Activated CD8-positive, alpha-beta T cell treated with anti-CD3 and anti-CD28 coated beads for 36 hours (primary cell): ENCODE measurements at regions of chr9 and their contacts with region 1.

Region 1: GRCh38 chr9:90219548-90220118 is 423.0 kb downstream of the DIRAS2 start:
- DNase-seq: peak; percentile 55
- ATAC-seq: peak; percentile 67
- H3K4me3 Mint-ChIP-seq: no peak overlapping the region
- H3K27ac Mint-ChIP-seq: no peak overlapping the region
- H3K4me1 Mint-ChIP-seq: no peaks in the 10 kb centered on the region
- H3K27me3 Mint-ChIP-seq: peaks cover 10% of the 10 kb centered on the region
- CTCF ChIP-seq: peak; percentile 58

Region 2: DNA sequence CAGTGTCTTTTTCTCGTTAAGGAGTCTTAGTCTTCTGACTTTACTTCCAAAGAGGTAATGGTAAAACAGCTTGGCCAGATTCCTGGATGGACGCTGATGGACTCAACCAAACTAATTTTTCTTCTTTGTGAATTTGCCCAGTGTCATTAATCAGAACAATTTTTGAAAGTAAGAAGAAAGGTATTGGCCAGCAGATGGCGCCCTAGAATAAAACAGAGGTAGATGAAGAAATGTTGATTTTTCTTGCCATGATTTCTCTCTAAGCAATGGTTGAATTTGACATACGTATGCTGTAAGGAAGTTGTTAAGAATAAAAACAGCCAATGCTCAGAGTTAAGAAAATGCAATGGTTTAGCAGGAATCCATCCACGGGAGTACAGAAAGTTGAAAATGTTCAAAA is 77.1 kb before region 1 on chr9:
- CTCF ChIA-PET with region 1: no interaction called
- POLR2A ChIA-PET with region 1: no interaction called
- intact Hi-C with region 1: loop called (anchors 5 kb)
- DNase-seq: peak; percentile 76
- ATAC-seq: no peak
- H3K4me3 Mint-ChIP-seq: no peak overlapping the region
- H3K27ac Mint-ChIP-seq: no peak overlapping the region
- H3K4me1 Mint-ChIP-seq: peaks cover 4% of the 10 kb centered on the region
- H3K27me3 Mint-ChIP-seq: peaks cover 20% of the 10 kb centered on the region
- CTCF ChIP-seq: peak; percentile 67

Region 3: DNA sequence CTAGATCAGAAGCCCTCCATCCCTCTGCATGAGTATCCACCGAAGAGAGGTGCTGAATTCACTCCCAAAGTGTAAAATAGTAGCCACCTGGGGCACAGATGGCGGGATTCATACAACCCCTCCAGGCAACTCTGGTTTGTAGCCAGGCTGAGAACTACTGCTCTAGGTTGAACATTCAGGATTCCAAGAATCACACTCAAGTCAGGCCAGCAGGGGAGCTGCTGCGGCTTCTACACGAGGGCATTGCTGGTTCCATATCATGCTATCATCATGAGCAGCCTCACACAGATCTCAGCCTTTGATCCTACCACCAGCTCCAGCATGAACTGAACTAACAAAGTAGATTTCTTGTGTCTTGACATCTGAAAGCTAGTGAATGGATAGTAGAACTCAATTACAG is 55.1 kb after region 1 on chr9:
- CTCF ChIA-PET with region 1: no interaction called
- POLR2A ChIA-PET with region 1: no interaction called
- intact Hi-C with region 1: no loop called
- DNase-seq: no peak
- ATAC-seq: no peak
- H3K4me3 Mint-ChIP-seq: no peak overlapping the region
- H3K27ac Mint-ChIP-seq: no peak overlapping the region
- H3K4me1 Mint-ChIP-seq: no peaks in the 10 kb centered on the region
- H3K27me3 Mint-ChIP-seq: peaks cover 11% of the 10 kb centered on the region
- CTCF ChIP-seq: no peak

Region 4: DNA sequence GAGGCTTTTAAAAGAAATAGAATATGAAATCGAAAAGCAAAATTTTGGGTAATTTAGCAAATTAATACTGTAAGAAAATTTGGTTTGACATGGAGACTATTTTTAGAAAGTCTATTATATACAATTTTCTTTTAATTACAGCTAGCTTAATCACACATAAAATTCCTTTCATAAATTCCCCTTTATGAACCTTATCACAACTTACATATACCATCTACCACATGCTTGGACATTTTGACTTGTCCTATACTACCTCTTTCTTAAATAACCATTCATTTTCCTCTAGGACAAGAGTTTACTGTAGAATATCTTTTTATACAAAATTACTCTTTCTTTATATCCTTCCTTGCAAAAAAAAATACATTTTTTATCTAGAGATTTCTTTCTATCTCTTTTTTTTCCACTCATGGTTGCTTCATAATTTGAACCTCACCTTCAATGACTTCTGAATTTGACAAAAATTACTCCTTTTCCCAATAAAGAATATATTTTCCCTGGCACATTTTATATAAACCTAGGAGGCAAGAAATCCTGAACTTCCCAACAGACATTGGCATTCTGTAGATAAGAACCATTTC is 548.0 kb after region 1 on chr9:
- CTCF ChIA-PET with region 1: no interaction called
- POLR2A ChIA-PET with region 1: no interaction called
- intact Hi-C with region 1: loop called (anchors 10 kb)
- DNase-seq: no peak
- ATAC-seq: no peak
- H3K4me3 Mint-ChIP-seq: no peak overlapping the region
- H3K27ac Mint-ChIP-seq: no peak overlapping the region
- H3K4me1 Mint-ChIP-seq: no peaks in the 10 kb centered on the region
- H3K27me3 Mint-ChIP-seq: peaks cover 5% of the 10 kb centered on the region
- CTCF ChIP-seq: no peak

Region 5: GRCh38 chr9:90870621-90871326 is 651.1 kb after region 1 on chr9:
- CTCF ChIA-PET with region 1: no interaction called
- POLR2A ChIA-PET with region 1: no interaction called
- intact Hi-C with region 1: loop called (anchors 10 kb)
- DNase-seq: peak; percentile 62
- ATAC-seq: no peak
- H3K4me3 Mint-ChIP-seq: no peak overlapping the region
- H3K27ac Mint-ChIP-seq: no peak overlapping the region
- H3K4me1 Mint-ChIP-seq: no peaks in the 10 kb centered on the region
- H3K27me3 Mint-ChIP-seq: no peaks in the 10 kb centered on the region
- CTCF ChIP-seq: peak; percentile 90